IMR-90 (cell line): ENCODE measurements at regions of chr10 and their contacts with region 1.

Region 1: DNA sequence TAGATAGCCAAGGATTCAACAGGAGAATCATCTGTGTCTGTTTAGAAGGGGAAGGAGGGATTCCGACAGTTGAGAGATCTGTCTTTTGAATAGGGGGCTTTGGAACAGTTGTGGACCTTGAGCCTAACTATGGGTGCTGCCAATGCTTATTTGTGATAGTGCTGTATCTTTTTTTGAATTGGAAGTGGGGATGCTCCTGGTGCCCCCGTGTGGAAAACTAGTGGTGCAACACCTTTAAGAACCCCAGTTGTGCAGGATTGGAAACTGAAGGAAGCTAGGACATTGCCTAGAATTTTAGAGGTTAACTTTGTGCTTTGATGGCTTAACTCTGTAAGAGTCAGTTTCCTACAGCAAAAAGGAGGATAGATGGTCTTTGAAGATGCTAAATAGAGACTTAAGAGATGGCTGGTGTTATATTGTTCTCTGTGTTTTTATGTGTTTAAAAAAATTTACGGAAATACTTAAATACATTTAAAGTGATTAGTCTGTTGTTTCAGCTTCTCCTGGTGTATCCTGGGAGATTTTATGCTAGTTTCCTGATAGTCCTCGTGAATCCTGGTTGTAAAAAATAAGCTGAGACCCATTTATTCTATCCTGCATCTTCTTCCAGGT is 69.3 kb downstream of the AP3M1 start:
- DNase-seq: peak; percentile 57
- ATAC-seq: peak; percentile 63
- H3K4me3 ChIP-seq: no peak overlapping the region
- H3K27ac ChIP-seq: no peak overlapping the region
- H3K4me1 ChIP-seq: peaks cover 7% of the 10 kb centered on the region
- H3K27me3 ChIP-seq: no peaks in the 10 kb centered on the region
- CTCF ChIP-seq: peak; percentile 69
- POLR2A ChIP-seq: no peak
- RAD21 ChIP-seq: peak; percentile 75

Region 2: GRCh38 chr10:72932259-72933015 is 1148.9 kb before region 1 on chr10:
- CTCF ChIA-PET with region 1: no interaction called
- POLR2A ChIA-PET with region 1: no interaction called
- dilution Hi-C with region 1: no loop called
- in situ Hi-C with region 1: no loop called
- intact Hi-C with region 1: no loop called
- DNase-seq: peak; percentile 11
- ATAC-seq: no peak
- H3K4me3 ChIP-seq: no peak overlapping the region
- H3K27ac ChIP-seq: no peak overlapping the region
- H3K4me1 ChIP-seq: no peaks in the 10 kb centered on the region
- H3K27me3 ChIP-seq: peaks cover 2% of the 10 kb centered on the region; the same call in 1 of the 2 replicates
- CTCF ChIP-seq: no peak
- POLR2A ChIP-seq: no peak
- RAD21 ChIP-seq: no peak

Region 3: GRCh38 chr10:73908853-73909538 is 172.3 kb before region 1 on chr10:
- CTCF ChIA-PET with region 1: no interaction called
- POLR2A ChIA-PET with region 1: no interaction called
- dilution Hi-C with region 1: no loop called
- in situ Hi-C with region 1: no loop called
- intact Hi-C with region 1: loop called (anchors 5 kb)
- DNase-seq: peak; percentile 100
- ATAC-seq: peak; percentile 24
- H3K4me3 ChIP-seq: no peak overlapping the region
- H3K27ac ChIP-seq: peak overlapping the region; percentile 91
- H3K4me1 ChIP-seq: peaks cover 38% of the 10 kb centered on the region
- H3K27me3 ChIP-seq: no peaks in the 10 kb centered on the region
- CTCF ChIP-seq: no peak
- POLR2A ChIP-seq: peak; percentile 85
- RAD21 ChIP-seq: peak; percentile 26

Region 4: DNA sequence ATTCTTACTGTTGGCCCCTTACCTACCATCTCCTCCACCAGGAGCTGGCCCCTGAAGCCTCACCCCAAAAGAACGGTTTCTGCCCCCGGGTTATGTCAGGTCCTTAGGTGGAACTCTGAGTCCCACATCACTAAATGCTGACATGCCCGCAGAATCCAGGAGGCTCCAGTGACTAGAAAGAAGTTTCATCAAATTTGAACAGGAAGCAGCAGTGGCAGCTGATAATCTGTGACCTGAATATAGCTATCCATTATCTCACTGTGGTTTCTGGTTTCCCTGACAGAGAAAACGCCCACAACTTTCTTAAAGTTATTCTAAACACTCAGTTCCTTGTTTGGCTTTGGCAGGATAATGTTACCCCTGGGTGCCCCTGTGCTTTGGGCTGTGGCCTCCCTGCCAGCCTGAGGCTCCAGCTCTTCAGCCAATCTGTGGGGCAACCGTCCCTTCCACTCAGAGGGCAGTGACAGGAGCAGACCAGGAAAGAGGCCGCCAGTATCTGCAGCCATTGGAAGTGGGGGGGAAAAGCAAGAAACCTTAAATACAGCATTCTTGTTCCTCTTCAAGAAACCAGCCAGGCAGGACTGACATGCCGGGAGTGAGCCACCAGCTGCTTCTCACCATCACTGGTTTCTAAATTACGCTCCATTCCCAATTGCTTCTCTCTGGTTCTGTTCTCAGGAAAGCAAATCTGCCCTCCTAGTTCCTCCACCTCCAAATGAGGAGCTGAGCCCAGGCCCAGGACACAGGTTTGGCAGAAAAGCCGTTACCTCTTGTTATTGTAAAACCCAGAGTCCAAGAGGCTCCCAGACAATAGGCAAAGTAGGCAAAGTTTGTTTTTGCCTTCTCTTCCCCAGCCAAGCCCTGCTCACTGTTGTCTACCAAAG is 124.6 kb before region 1 on chr10:
- CTCF ChIA-PET with region 1: no interaction called
- POLR2A ChIA-PET with region 1: no interaction called
- dilution Hi-C with region 1: no loop called
- in situ Hi-C with region 1: no loop called
- intact Hi-C with region 1: loop called (anchors 5 kb)
- DNase-seq: peak; percentile 62
- ATAC-seq: peak; percentile 72
- H3K4me3 ChIP-seq: no peak overlapping the region
- H3K27ac ChIP-seq: peak overlapping the region; percentile 69
- H3K4me1 ChIP-seq: peaks cover 15% of the 10 kb centered on the region
- H3K27me3 ChIP-seq: no peaks in the 10 kb centered on the region
- CTCF ChIP-seq: no peak
- POLR2A ChIP-seq: no peak
- RAD21 ChIP-seq: no peak; the same call in 1 of the 2 replicates

Region 5: DNA sequence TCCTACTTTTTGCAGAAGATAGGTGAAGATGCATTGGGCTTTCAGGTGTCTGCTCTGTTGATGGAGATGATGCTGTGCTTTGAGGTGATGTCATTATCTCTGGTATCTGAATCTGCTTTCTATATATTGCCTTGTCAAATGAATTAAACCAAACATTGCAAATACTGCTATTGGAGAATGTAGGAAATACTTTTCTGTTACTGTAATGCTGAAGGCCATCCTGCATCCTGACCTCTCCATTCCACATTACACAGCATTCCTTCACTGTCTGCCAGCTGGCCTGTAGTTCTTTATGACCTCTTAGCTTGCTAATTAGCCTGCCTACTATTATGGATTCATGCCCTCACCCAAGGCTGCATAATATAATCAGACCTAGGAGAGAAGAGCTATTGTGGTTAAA is 10.1 kb before region 1 on chr10:
- CTCF ChIA-PET with region 1: interaction called, 10 read pairs
- POLR2A ChIA-PET with region 1: no interaction called
- dilution Hi-C with region 1: no loop called
- in situ Hi-C with region 1: no loop called
- intact Hi-C with region 1: no loop called
- DNase-seq: peak; percentile 92
- ATAC-seq: peak; percentile 87
- H3K4me3 ChIP-seq: no peak overlapping the region
- H3K27ac ChIP-seq: no peak overlapping the region; the same call in 1 of the 2 replicates
- H3K4me1 ChIP-seq: peaks cover 18% of the 10 kb centered on the region
- H3K27me3 ChIP-seq: no peaks in the 10 kb centered on the region
- CTCF ChIP-seq: no peak
- POLR2A ChIP-seq: no peak
- RAD21 ChIP-seq: no peak